Esophagus muscularis mucosa (tissue), 4 donors: ENCODE measurements at regions of chr1 and their contacts with region 1.

Region 1: DNA sequence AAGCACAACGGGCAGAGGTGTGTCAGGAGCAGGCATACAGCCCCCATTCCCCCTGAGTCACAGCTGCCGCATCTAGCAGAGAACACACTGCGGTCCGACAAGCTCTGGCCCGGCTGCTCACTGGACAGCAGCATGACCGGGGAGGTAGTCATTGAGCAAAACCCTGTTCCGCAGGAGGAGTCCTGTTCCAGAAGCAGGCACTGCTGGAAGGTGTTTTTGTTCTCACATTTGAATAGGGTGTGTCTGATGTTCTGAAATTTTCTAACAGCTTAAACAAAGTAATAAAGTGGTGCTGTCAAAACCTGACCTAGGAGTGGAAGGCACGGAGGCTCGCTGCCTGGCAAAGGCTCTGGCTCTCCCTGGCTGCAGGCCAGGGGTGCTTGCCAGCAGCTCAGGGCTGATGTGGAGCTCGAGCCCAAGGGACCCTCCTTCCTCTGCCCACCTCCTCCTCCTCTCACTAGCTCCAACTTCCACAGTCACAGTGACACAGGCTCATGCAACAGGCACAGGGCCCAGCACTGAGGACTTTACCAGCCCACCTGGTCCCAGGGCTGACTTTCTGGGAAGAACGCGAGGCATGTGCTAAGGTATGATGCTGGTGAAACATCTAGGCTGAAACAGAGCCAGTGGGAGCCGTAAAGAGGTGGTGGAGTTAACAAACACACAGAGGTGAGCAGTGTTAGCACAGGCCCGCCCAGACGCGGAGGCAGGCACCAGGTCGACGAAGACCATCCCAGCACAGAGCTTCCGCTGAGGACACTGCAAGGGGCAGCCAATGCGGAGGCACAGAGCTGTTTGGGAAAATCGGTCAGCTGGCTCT is 118.6 kb upstream of the IFFO2 start:
- DNase-seq: no peak
- H3K4me3 ChIP-seq: no peak overlapping the region
- H3K27ac ChIP-seq: peak overlapping the region; percentile 53 to 67 (median 62)
- H3K4me1 ChIP-seq: peaks cover 20 to 43% (median 32%) of the 10 kb centered on the region in 4 donors
- H3K27me3 ChIP-seq: no peaks in the 10 kb centered on the region
- CTCF ChIP-seq: no peak
- EP300 ChIP-seq: no peak
- POLR2A ChIP-seq: no peak

Region 2: DNA sequence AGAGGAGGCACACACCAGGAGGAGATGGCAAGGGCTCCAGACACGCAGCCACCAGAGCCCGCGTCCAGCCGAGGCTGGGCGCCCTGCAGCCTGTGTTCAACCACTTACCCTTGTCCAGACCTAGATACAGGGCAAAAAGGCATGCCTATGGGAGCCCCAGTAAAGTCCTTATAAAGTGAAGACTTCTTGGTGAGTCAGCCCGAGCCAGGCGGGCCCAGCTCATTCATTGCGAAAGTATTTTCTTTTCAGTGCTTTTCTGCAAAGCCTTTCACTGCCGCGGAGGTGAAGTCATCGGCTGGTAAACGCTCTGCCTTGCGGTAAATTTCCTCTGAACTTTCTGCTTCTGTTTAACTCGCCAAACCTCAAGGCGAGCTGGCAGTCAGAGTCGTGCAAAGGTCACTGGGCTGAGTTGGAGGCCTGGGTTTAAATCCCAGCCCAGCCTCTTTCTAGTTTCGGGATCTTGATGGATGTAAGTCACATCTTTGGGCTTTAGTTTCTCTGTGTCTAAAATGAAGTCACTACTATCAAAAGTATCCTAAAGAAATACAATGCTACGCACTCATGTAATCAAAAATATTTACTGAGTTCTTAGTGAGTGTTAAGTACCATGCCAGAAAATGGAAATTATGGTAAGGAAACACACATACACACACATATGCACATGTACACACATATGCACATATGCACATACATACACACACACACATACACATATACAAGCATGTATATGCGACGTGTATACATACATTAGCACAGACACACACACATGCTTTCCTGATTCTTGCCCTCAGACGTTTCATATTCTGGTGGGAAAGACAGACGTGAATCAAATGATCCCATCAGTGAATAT is 63.9 kb before region 1 on chr1:
- intact Hi-C with region 1: loop called (anchors 5 kb)
- DNase-seq: peak; percentile 94
- H3K4me3 ChIP-seq: peak overlapping the region in 3 of 4 donors; percentile 18 to 24 (median 22)
- H3K27ac ChIP-seq: peak overlapping the region; percentile 74 to 84 (median 84)
- H3K4me1 ChIP-seq: peaks cover 11 to 33% (median 29%) of the 10 kb centered on the region in 4 donors
- H3K27me3 ChIP-seq: no peaks in the 10 kb centered on the region
- CTCF ChIP-seq: no peak
- EP300 ChIP-seq: peak; percentile 26
- POLR2A ChIP-seq: no peak